ENCODE measurements at regions of chr16 and their contacts with region 1.

Region 1: DNA sequence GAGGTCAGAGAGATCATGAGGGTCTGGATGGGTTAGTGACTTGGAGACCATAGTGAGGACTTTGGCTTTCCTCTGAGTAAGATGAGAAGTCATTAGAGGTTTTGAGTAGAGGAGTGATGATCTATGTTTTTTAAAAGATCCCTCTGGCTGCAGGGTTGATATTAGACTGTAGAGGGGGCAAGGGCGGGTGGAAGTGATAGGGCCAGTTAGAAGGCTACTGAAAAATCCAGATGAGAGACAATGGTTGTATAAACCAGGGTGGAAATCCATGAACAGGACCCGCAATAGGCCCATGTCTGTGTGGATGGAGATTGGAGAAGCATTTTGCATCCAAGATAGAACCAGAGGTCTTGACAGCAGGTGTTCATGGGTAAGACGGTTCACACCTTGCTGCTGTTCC is 9.8 kb downstream of the ITGAL start:
- DNase-seq: peak in 3 of 14 experiments; percentile 21 to 38 (median 23)
- ATAC-seq: peak; percentile 80
- H3K4me3 ChIP-seq: no peak overlapping the region
- H3K4me3 Mint-ChIP-seq: no peak overlapping the region
- H3K27ac ChIP-seq: no peak overlapping the region
- H3K27ac Mint-ChIP-seq: peak overlapping the region; percentile 76
- H3K4me1 ChIP-seq: peaks cover 62% of the 10 kb centered on the region
- H3K4me1 Mint-ChIP-seq: peaks cover 24% of the 10 kb centered on the region
- H3K27me3 ChIP-seq: no peaks in the 10 kb centered on the region
- H3K27me3 Mint-ChIP-seq: no peaks in the 10 kb centered on the region
- CTCF ChIP-seq: no peak

Region 2: GRCh38 chr16:30458561-30459394 is 23.6 kb before region 1 on chr16:
- CTCF ChIA-PET with region 1: interaction called, 3 read pairs
- POLR2A ChIA-PET with region 1: interaction called, 25 read pairs
- intact Hi-C with region 1: no loop called
- DNase-seq: peak in 13 of 14 experiments; percentile 49 to 93 (median 71)
- ATAC-seq: peak; percentile 94
- H3K4me3 ChIP-seq: peak overlapping the region; percentile 13
- H3K4me3 Mint-ChIP-seq: peak overlapping the region; percentile 60
- H3K27ac ChIP-seq: peak overlapping the region; percentile 55 to 61
- H3K27ac Mint-ChIP-seq: peak overlapping the region; percentile 91
- H3K4me1 ChIP-seq: peaks cover 37% of the 10 kb centered on the region
- H3K4me1 Mint-ChIP-seq: peaks cover 55% of the 10 kb centered on the region
- H3K27me3 ChIP-seq: no peaks in the 10 kb centered on the region
- H3K27me3 Mint-ChIP-seq: no peaks in the 10 kb centered on the region
- CTCF ChIP-seq: no peak

Region 3: GRCh38 chr16:30519120-30520049 is 37.0 kb after region 1 on chr16:
- CTCF ChIA-PET with region 1: no interaction called
- POLR2A ChIA-PET with region 1: no interaction called
- intact Hi-C with region 1: loop called in 1 of 2 experiments (anchors 5 kb)
- DNase-seq: no peak
- ATAC-seq: no peak
- H3K4me3 ChIP-seq: no peak overlapping the region
- H3K4me3 Mint-ChIP-seq: no peak overlapping the region
- H3K27ac ChIP-seq: peak overlapping the region in 1 of 2 donors; percentile 13
- H3K27ac Mint-ChIP-seq: peak overlapping the region; percentile 63
- H3K4me1 ChIP-seq: peaks cover 6% of the 10 kb centered on the region
- H3K4me1 Mint-ChIP-seq: no peaks in the 10 kb centered on the region
- H3K27me3 ChIP-seq: no peaks in the 10 kb centered on the region
- H3K27me3 Mint-ChIP-seq: no peaks in the 10 kb centered on the region
- CTCF ChIP-seq: no peak

Region 4: GRCh38 chr16:30602616-30603277 is 120.4 kb after region 1 on chr16:
- CTCF ChIA-PET with region 1: no interaction called
- POLR2A ChIA-PET with region 1: interaction called, 3 read pairs
- intact Hi-C with region 1: loop called in 1 of 2 experiments (anchors 2 kb)
- DNase-seq: peak in 2 of 14 experiments; percentile 20 to 26
- ATAC-seq: no peak
- H3K4me3 ChIP-seq: no peak overlapping the region
- H3K4me3 Mint-ChIP-seq: no peak overlapping the region
- H3K27ac ChIP-seq: no peak overlapping the region
- H3K27ac Mint-ChIP-seq: no peak overlapping the region
- H3K4me1 ChIP-seq: peaks cover 7% of the 10 kb centered on the region
- H3K4me1 Mint-ChIP-seq: peaks cover 9% of the 10 kb centered on the region
- H3K27me3 ChIP-seq: no peaks in the 10 kb centered on the region
- H3K27me3 Mint-ChIP-seq: no peaks in the 10 kb centered on the region
- CTCF ChIP-seq: no peak